Gastrocnemius medialis (tissue), 4 donors: ENCODE measurements at regions of chr20 and their contacts with region 1.

Region 1: DNA sequence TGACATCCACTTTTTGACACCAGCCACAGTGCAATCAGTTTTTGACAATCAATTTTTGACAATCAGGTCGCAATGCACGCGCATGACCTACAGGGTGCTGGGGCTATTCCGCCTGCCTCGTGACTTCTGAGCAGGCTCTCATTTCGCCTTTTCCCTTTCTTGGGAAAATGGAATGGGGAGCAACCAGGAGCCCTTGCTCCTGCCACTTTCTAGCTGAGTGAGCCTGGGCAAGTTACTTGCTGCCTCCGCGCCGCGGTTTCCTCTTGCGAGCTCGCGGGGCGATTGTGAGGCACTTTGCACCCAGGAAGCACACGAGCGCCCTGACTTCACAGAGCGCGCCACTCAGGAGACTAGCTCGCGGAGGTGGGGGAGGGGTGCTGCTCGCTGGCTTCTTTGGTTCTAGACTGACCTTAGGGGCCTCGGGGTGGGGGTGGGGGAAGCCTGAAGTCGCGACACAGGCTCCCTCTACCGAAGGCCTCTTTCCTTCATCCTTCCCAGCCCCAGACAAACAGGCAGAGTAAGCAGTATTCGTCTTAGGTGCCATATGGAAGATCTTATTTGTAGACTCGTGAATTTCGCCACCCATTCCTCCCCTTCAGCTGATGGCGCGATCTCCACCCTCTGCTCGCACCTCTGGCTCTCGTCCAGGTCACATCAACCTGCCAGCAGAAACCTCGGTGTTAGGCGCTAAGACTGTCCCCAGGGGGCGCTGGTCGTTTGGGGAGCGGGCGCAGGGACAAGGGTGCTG is 4.6 kb downstream of the TP53TG5 start:
- DNase-seq: peak; percentile 69 to 79
- ATAC-seq: peak; percentile 82 to 86
- H3K4me3 ChIP-seq: peak overlapping the region; percentile 63 to 70 (median 64)
- H3K27ac ChIP-seq: peak overlapping the region; percentile 79 to 83 (median 80)
- H3K4me1 ChIP-seq: peaks cover 6 to 12% of the 10 kb centered on the region in 2 donors
- H3K27me3 ChIP-seq: no peaks in the 10 kb centered on the region
- CTCF ChIP-seq: peak; percentile 85 to 91 (median 88)
- POLR2A ChIP-seq: no peak

Region 2: DNA sequence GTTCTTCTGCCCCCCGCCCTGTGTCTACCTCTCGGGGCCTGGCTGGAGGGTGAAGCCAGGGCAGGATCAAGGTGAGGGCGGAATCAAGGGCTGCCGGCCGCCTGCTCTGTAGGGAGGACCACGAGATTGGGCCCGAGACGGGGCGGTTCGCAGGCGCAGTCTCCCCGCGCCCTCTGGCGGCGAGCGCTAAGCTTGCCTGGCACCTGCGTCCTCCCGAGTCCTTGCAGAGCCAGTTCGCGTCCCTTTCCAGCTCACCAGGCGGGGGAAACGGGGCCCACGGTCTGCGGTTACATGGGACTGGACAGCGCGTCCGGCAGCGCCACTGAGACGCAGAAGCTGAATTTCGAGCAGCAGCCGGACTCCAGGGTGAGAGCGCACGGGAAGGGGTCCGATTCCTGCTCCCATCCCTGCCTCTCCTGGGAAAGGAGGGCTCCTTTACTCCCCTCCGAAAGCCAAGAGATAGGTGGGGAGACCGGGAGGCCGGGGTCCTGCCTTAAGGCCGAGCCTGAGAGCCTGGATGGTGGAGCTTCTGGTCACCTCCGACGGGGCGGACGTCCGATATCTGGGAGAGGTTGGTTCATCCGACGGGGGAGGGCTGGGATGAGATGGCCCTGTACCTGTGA is 61.8 kb before region 1 on chr20:
- in situ Hi-C with region 1: loop called in 1 of 4 experiments (anchors 10 kb)
- intact Hi-C with region 1: no loop called
- DNase-seq: no peak
- ATAC-seq: no peak
- H3K4me3 ChIP-seq: no peak overlapping the region
- H3K27ac ChIP-seq: no peak overlapping the region
- H3K4me1 ChIP-seq: peaks cover 0 to 5% of the 10 kb centered on the region in 2 donors
- H3K27me3 ChIP-seq: peaks cover 6 to 20% (median 13%) of the 10 kb centered on the region in 3 donors
- CTCF ChIP-seq: peak; percentile 35 to 82 (median 69)
- POLR2A ChIP-seq: no peak

Region 3: GRCh38 chr20:45362804-45363610 is 10.5 kb before region 1 on chr20 and contains the start of gene SYS1:
- in situ Hi-C with region 1: no loop called
- intact Hi-C with region 1: no loop called
- DNase-seq: peak; percentile 98
- ATAC-seq: peak; percentile 63 to 76
- H3K4me3 ChIP-seq: peak within 1 kb of the TSS; percentile 66 to 86 (median 75)
- H3K27ac ChIP-seq: peak within 1 kb of the TSS; percentile 94 to 99 (median 96)
- H3K4me1 ChIP-seq: peaks cover 26 to 27% of the 10 kb centered on the region in 2 donors
- H3K27me3 ChIP-seq: no peaks in the 10 kb centered on the region
- CTCF ChIP-seq: peak; percentile 89 to 95 (median 95)
- POLR2A ChIP-seq: peak; percentile 90 to 97
- total RNA-seq, gene SYS1: 34.0 to 59.5 (median 43.7) TPM

Region 4: DNA sequence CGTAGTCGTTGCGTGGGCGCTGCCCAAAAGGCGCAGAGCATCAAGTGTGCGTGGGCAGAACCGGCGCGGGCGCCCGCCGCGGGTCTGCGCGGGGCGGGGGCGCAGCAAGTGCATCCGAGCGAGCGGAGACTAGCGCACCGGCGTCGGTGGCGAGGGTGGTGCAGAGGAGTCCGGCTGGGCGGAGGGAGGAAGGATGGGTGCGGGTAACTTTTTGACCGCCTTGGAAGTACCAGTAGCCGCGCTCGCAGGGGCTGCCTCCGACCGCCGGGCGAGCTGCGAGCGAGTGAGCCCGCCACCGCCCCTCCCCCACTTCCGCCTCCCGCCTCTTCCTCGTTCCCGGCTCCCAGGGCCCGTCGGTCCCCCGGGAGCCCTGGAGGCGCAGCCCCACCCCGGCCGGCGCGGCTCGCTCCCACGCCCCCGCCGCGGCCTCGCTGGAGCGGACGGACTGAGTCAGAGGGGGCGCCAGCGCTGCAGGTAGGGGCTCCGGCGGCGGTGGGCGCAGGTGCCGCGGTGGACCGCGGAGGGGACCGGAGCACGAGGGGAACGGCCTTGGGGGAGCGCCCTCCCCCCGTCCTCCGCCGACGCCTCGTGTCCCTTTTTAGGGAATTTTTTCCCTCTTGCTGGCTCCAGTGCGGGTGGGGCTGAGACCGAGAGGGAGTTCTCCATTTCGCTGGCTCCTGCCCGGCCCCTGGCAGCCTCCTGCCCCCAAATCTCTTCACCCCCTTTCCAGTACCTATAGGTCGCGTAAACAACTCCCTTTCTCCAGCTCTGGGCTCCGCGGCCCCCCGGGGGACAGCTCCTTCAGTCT is 32.9 kb after region 1 on chr20:
- in situ Hi-C with region 1: loop called in 1 of 4 experiments (anchors 5 kb)
- intact Hi-C with region 1: loop called (anchors 1 kb)
- DNase-seq: peak; percentile 49 to 62
- ATAC-seq: peak; percentile 70 to 73
- H3K4me3 ChIP-seq: peak overlapping the region; percentile 87 to 96 (median 91)
- H3K27ac ChIP-seq: peak overlapping the region; percentile 96 to 100 (median 98)
- H3K4me1 ChIP-seq: peaks cover 40 to 42% of the 10 kb centered on the region in 2 donors
- H3K27me3 ChIP-seq: no peaks in the 10 kb centered on the region
- CTCF ChIP-seq: no peak
- POLR2A ChIP-seq: peak; percentile 55 to 62

Region 5: DNA sequence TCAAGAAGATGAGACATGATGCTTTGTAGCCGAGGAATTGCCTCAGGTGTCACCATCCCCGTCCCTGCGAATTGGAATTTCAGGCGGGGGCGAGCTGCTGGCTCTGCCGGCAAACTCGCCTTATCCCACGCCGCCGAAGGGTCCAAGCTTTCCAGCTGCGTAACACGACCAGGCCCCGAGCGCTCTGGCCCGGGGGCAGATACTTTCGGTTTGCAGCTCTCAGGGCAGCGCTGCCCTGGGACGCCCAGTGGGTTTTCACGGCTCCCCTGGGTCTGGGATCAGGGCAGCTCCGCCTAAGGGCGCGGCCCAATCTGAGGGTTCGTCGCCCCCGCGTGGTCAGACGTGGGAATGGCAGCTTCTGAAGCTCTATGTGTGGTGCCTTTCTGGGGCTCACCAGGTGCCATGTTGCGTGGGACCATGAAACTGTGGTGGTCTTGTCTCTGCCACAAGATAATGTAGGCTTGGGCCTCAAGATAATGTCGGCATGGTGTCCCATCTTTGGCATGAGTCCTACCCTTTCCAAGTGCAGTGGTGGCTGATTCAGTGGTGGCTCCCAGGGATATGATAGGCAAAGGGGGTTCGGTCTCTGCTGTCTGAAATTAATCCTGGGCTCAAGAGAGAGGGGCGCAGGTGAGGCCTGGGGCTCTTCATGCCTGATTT is 63.3 kb after region 1 on chr20:
- in situ Hi-C with region 1: loop called in 3 of 4 experiments (anchors 5 to 10 kb)
- intact Hi-C with region 1: loop called (anchors 1 kb)
- DNase-seq: peak; percentile 64 to 87
- ATAC-seq: peak; percentile 94 to 96
- H3K4me3 ChIP-seq: peak overlapping the region; percentile 60 to 82 (median 74)
- H3K27ac ChIP-seq: peak overlapping the region; percentile 81 to 86 (median 84)
- H3K4me1 ChIP-seq: peaks cover 4 to 6% of the 10 kb centered on the region in 2 donors
- H3K27me3 ChIP-seq: no peaks in the 10 kb centered on the region
- CTCF ChIP-seq: peak; percentile 94 to 98 (median 97)
- POLR2A ChIP-seq: no peak

Region 6: GRCh38 chr20:45701104-45701503 is 327.6 kb after region 1 on chr20:
- in situ Hi-C with region 1: no loop called
- intact Hi-C with region 1: no loop called
- DNase-seq: no peak
- ATAC-seq: no peak
- H3K4me3 ChIP-seq: no peak overlapping the region
- H3K27ac ChIP-seq: no peak overlapping the region
- H3K4me1 ChIP-seq: no peaks in the 10 kb centered on the region
- H3K27me3 ChIP-seq: no peaks in the 10 kb centered on the region
- CTCF ChIP-seq: no peak
- POLR2A ChIP-seq: no peak